Activated naive CD4-positive, alpha-beta T cell treated with anti-CD3 and anti-CD28 coated beads for 36 hours (primary cell): ENCODE measurements at regions of chr9 and their contacts with region 1.

Region 1: DNA sequence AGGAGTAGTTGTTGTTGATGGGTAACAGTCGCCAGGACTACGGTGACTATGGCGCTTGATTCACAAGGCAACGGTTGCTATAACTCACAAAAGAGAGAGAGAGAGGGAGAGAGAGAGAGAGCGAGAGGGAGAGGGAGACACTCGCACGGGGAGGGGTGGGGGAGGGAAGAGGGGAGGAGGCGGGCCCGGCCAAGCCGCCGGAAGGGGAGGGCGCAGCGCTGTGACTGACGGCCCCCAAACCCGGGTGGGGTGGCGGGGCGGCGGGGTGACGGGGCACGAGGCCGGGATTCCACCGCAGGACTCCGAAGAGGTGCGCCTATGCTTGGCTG is at the start of gene RFX3:
- DNase-seq: peak; percentile 94
- H3K4me3 Mint-ChIP-seq: peak within 1 kb of the TSS; percentile 93
- H3K27ac Mint-ChIP-seq: peak within 1 kb of the TSS; percentile 100
- H3K4me1 Mint-ChIP-seq: peaks cover 34% of the 10 kb centered on the region
- H3K27me3 Mint-ChIP-seq: no peaks in the 10 kb centered on the region
- total RNA-seq, gene RFX3: 11.0 to 12.7 TPM

Region 2: DNA sequence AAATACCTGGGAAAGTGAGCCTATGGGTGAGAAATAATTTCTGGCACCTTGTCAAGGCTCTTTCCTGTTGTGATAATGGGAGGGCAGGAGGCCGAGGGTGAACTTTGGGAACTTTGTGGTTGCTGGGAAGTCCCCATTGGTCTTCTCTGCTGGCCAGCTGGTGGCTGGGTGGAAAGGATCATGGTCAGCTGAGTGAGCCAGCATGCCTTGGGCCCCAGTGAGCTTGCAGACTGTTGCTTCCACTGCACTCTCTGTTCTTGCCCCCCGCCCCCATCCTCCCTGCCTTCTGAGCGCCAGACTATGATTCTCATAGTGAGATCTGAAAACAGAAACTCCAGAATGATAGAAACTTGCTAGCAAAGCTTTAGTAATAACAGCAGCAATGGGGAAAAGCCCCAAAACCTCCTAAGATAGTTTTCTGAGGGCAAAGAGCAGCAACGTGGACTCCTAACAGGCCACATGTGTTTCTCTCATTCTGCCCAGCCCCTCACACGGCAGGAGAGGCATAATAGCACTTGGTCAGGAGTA is 1649.8 kb before region 1 on chr9:
- CTCF ChIA-PET with region 1: no interaction called
- intact Hi-C with region 1: loop called (anchors 5 kb)
- DNase-seq: peak; percentile 89
- H3K4me3 Mint-ChIP-seq: no peak overlapping the region
- H3K27ac Mint-ChIP-seq: peak overlapping the region; percentile 78
- H3K4me1 Mint-ChIP-seq: peaks cover 43% of the 10 kb centered on the region
- H3K27me3 Mint-ChIP-seq: peaks cover 10% of the 10 kb centered on the region

Region 3: GRCh38 chr9:2857564-2858198 is 668.1 kb before region 1 on chr9:
- CTCF ChIA-PET with region 1: no interaction called
- intact Hi-C with region 1: loop called (anchors 5 kb)
- DNase-seq: peak; percentile 84
- H3K4me3 Mint-ChIP-seq: no peak overlapping the region
- H3K27ac Mint-ChIP-seq: no peak overlapping the region
- H3K4me1 Mint-ChIP-seq: peaks cover 6% of the 10 kb centered on the region
- H3K27me3 Mint-ChIP-seq: peaks cover 18% of the 10 kb centered on the region

Region 4: DNA sequence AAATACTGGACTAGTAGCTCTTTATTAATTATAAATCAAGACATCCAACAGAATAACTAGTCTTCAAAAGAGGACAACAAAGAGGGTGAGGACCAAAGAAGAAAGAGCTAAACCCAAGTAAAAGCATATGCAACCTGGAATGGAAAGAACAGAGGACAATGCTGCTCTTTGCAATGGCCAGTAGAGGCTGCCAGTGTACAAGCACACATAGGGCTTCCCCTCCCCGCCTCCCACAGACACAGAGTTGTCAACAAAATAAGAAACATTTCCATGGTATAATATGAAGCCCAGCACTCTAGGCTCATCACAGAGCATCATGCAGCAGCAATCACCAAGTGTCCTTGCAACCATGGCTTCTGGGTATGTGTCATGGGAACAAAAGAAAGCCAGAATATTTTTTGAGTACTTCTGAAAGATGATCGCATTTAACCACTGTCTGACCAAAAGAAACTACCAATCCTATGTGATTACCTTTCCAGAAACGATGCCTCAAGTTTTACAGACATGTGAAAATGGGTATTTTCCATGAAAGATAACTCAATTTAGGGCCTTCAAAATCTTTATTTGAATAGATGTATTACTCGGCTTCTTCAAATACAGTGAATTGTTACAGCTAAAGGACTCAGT is 58.1 kb before region 1 on chr9:
- CTCF ChIA-PET with region 1: interaction called, 12 read pairs
- intact Hi-C with region 1: loop called (anchors 1 kb)
- DNase-seq: peak; percentile 75
- H3K4me3 Mint-ChIP-seq: no peak overlapping the region
- H3K27ac Mint-ChIP-seq: no peak overlapping the region
- H3K4me1 Mint-ChIP-seq: peaks cover 12% of the 10 kb centered on the region
- H3K27me3 Mint-ChIP-seq: no peaks in the 10 kb centered on the region

Region 5: GRCh38 chr9:3682186-3682585 is 156.4 kb after region 1 on chr9:
- CTCF ChIA-PET with region 1: no interaction called
- intact Hi-C with region 1: no loop called
- DNase-seq: no peak
- H3K4me3 Mint-ChIP-seq: no peak overlapping the region
- H3K27ac Mint-ChIP-seq: no peak overlapping the region
- H3K4me1 Mint-ChIP-seq: no peaks in the 10 kb centered on the region
- H3K27me3 Mint-ChIP-seq: no peaks in the 10 kb centered on the region

Region 6: DNA sequence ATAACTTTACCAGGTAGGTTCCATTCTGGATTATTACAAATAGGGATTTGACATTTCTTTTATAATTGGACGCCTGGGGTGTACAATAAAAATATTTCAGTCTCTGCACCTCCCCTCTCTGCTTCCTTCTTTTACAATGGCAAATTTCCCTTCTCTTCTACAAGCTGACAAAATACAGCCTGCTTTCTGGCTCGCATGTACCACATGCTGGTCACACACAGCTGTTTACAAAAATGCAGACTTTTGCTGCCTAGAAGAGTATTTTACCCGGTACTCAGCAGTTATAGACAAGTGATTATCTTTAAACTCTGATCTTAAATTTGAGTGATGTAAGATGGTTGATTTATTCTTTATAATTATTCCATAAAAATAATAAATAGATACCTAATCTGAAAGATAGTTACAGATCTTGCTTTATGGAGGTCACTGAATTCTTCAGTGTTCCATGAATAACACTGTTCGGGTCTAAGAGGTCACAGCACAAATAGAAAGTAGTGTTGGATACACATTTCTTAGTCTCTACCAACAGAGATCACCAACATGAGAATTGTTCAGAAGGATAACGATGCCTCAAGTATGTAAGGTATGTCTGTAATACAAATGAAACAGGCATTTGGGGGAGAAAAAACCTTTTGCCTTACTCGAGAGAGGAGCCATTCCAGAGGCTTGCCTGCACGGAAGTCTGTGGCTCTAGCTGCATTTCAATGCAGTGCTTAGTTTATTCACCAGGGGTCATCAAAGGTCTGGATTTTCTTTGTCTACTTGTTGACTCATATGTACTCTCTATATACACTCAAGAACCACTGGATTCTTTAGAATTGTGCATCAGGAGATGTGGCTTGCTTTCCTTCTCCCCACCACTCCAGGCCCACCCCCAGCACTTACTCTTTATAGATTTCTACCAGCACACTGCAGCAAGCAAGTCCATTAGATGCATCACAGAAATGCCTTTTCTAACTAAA is 206.6 kb after region 1 on chr9:
- CTCF ChIA-PET with region 1: no interaction called
- intact Hi-C with region 1: loop called (anchors 5 kb)
- DNase-seq: peak; percentile 55
- H3K4me3 Mint-ChIP-seq: no peak overlapping the region
- H3K27ac Mint-ChIP-seq: no peak overlapping the region
- H3K4me1 Mint-ChIP-seq: peaks cover 18% of the 10 kb centered on the region
- H3K27me3 Mint-ChIP-seq: peaks cover 2% of the 10 kb centered on the region

Region 7: DNA sequence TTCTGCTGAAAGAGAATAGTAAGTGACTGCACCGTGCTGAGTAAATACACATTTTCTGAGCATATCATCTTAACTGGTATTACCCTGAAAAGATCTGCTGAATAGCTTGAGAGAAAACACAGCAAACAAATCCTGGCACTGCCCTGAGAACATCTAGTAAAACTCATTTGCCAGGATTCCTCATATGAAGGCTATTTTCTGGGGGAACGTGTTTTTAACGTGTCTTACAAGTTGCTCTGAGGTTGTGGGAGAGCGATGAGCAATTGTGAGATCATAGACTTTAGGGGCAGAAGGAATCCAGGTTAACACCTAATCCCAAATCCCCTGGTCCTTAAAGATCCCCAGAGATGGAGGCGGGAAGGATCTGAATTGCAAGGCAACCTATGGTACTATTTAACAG is 331.9 kb after region 1 on chr9:
- CTCF ChIA-PET with region 1: no interaction called
- intact Hi-C with region 1: no loop called
- DNase-seq: no peak
- H3K4me3 Mint-ChIP-seq: no peak overlapping the region
- H3K27ac Mint-ChIP-seq: no peak overlapping the region
- H3K4me1 Mint-ChIP-seq: no peaks in the 10 kb centered on the region
- H3K27me3 Mint-ChIP-seq: peaks cover 3% of the 10 kb centered on the region

Region 8: GRCh38 chr9:4339357-4339756 is 813.6 kb after region 1 on chr9:
- CTCF ChIA-PET with region 1: interaction called, 3 read pairs
- intact Hi-C with region 1: loop called (anchors 5 kb)
- DNase-seq: peak; percentile 96
- H3K4me3 Mint-ChIP-seq: peak overlapping the region; percentile 51
- H3K27ac Mint-ChIP-seq: peak overlapping the region; percentile 69
- H3K4me1 Mint-ChIP-seq: peaks cover 10% of the 10 kb centered on the region
- H3K27me3 Mint-ChIP-seq: no peaks in the 10 kb centered on the region

Region 9: GRCh38 chr9:4832786-4833579 is 1307.2 kb after region 1 on chr9:
- CTCF ChIA-PET with region 1: no interaction called
- intact Hi-C with region 1: loop called (anchors 1 kb)
- DNase-seq: peak; percentile 80
- H3K4me3 Mint-ChIP-seq: no peak overlapping the region
- H3K27ac Mint-ChIP-seq: peak overlapping the region; percentile 85
- H3K4me1 Mint-ChIP-seq: peaks cover 46% of the 10 kb centered on the region
- H3K27me3 Mint-ChIP-seq: no peaks in the 10 kb centered on the region